K562 (cell line): ENCODE measurements at regions of chr1 and their contacts with region 1.

Region 1: GRCh38 chr1:26787706-26788514 is at the start of gene PIGV:
- DNase-seq: peak; percentile 94 to 97 (median 96)
- ATAC-seq: peak; percentile 76
- H3K4me3 ChIP-seq: peak within 1 kb of the TSS; percentile 66
- H3K27ac ChIP-seq: peak within 1 kb of the TSS; percentile 98
- H3K4me1 ChIP-seq: peaks cover 61 to 81% of the 10 kb centered on the region in 2 experiments
- H3K27me3 ChIP-seq: no peaks in the 10 kb centered on the region
- CTCF ChIP-seq: no peak
- EP300 ChIP-seq: no peak
- POLR2A ChIP-seq: peak; percentile 88
- RAD21 ChIP-seq: no peak; a peak in 2 of 4 replicates
- polyA plus RNA-seq, gene PIGV: 11.3 to 11.7 TPM

Region 2: GRCh38 chr1:26482921-26483680 is 304.8 kb before region 1 on chr1:
- CTCF ChIA-PET with region 1: no interaction called
- POLR2A ChIA-PET with region 1: no interaction called
- in situ Hi-C with region 1: no loop called
- intact Hi-C with region 1: loop called (anchors 5 kb)
- DNase-seq: no peak
- ATAC-seq: no peak
- H3K4me3 ChIP-seq: no peak overlapping the region
- H3K27ac ChIP-seq: no peak overlapping the region
- H3K4me1 ChIP-seq: peaks cover 15 to 16% of the 10 kb centered on the region in 2 experiments
- H3K27me3 ChIP-seq: no peaks in the 10 kb centered on the region
- CTCF ChIP-seq: no peak
- EP300 ChIP-seq: no peak
- POLR2A ChIP-seq: no peak
- RAD21 ChIP-seq: no peak

Region 3: GRCh38 chr1:26602378-26602959 is 185.4 kb before region 1 on chr1:
- CTCF ChIA-PET with region 1: interaction called, 80 read pairs
- POLR2A ChIA-PET with region 1: interaction called, 30 read pairs
- in situ Hi-C with region 1: no loop called
- intact Hi-C with region 1: loop called (anchors 1 kb)
- DNase-seq: peak; percentile 72 to 84 (median 76)
- ATAC-seq: peak; percentile 61
- H3K4me3 ChIP-seq: no peak overlapping the region
- H3K27ac ChIP-seq: no peak overlapping the region
- H3K4me1 ChIP-seq: peaks cover 4 to 22% of the 10 kb centered on the region in 2 experiments; a peak in 4 of 5 replicates
- H3K27me3 ChIP-seq: no peaks in the 10 kb centered on the region
- CTCF ChIP-seq: peak; percentile 83 to 98 (median 83)
- EP300 ChIP-seq: 0 out of 2 replicates have a peak, but pooled peaks have one; percentile 12
- POLR2A ChIP-seq: no peak
- RAD21 ChIP-seq: peak; percentile 100

Region 4: GRCh38 chr1:26677306-26678115 is 110.4 kb before region 1 on chr1:
- CTCF ChIA-PET with region 1: interaction called, 6 read pairs
- POLR2A ChIA-PET with region 1: no interaction called
- in situ Hi-C with region 1: no loop called
- intact Hi-C with region 1: loop called (anchors 1 kb)
- DNase-seq: peak; percentile 52 to 87 (median 73)
- ATAC-seq: peak; percentile 99
- H3K4me3 ChIP-seq: no peak overlapping the region
- H3K27ac ChIP-seq: no peak overlapping the region
- H3K4me1 ChIP-seq: peaks cover 9% of the 10 kb centered on the region in 2 experiments; a peak in 3 of 5 replicates
- H3K27me3 ChIP-seq: no peaks in the 10 kb centered on the region
- CTCF ChIP-seq: peak; percentile 83 to 95 (median 87)
- EP300 ChIP-seq: peak; percentile 41
- POLR2A ChIP-seq: no peak
- RAD21 ChIP-seq: peak; percentile 97 to 98

Region 5: GRCh38 chr1:26705788-26706311 is 82.1 kb before region 1 on chr1:
- CTCF ChIA-PET with region 1: no interaction called
- POLR2A ChIA-PET with region 1: interaction called, 112 read pairs
- in situ Hi-C with region 1: no loop called
- intact Hi-C with region 1: no loop called
- DNase-seq: no peak
- ATAC-seq: no peak
- H3K4me3 ChIP-seq: no peak overlapping the region
- H3K27ac ChIP-seq: peak overlapping the region; percentile 40; the same call in 1 of the 3 replicates
- H3K4me1 ChIP-seq: peaks cover 19 to 52% of the 10 kb centered on the region in 2 experiments; a peak in 4 of 5 replicates
- H3K27me3 ChIP-seq: no peaks in the 10 kb centered on the region
- CTCF ChIP-seq: no peak
- EP300 ChIP-seq: no peak
- POLR2A ChIP-seq: no peak
- RAD21 ChIP-seq: no peak

Region 6: DNA sequence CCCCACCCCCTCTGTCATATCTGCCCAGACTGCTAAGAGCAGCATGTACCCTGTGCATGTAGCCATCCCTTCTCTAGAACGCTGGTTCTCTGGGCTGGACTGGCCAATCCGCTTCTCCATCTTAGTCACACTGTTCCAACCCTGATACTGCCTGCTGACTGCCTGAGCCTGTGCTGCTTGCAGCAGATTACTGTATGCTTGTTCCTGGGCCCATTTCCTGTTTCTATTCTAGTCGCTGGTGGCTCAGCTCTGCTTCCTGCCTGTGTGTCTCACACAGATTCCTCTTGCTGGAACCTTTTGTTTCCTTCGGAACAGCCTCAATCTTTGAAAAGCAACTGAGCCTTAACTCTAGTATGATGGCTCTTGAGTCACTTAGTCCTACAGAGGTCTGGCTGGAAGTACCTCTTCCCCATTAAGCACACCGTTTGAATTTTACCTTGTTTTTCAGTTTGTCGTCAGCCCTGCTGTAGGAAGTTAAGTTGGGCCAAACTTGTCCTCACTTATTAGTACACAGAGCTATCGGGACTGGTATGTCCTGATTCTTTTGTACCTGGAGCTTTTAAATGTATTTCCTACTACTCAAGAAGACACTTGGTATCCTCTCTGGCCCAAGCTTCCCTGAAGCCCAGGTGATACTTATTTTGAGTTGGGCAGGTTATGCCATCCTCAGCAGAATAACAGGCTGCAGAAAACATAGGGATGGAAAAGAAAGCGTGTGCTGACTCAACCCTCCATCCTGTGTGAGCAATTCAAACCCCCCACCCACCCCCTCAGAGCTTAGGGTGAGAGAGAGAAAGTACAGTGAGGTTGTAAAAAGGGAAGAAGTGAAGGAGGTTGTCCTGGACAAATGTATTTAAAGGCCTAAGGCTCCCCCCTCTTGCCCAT is 43.6 kb before region 1 on chr1:
- CTCF ChIA-PET with region 1: no interaction called
- POLR2A ChIA-PET with region 1: interaction called, 9 read pairs
- in situ Hi-C with region 1: no loop called
- intact Hi-C with region 1: loop called (anchors 2 kb)
- DNase-seq: peak; percentile 59 to 97 (median 79)
- ATAC-seq: peak; percentile 99
- H3K4me3 ChIP-seq: no peak overlapping the region
- H3K27ac ChIP-seq: peak overlapping the region; percentile 82
- H3K4me1 ChIP-seq: peaks cover 13 to 27% of the 10 kb centered on the region in 2 experiments; a peak in 4 of 5 replicates
- H3K27me3 ChIP-seq: no peaks in the 10 kb centered on the region
- CTCF ChIP-seq: no peak; a peak in 1 of 6 replicates
- EP300 ChIP-seq: peak; percentile 86
- POLR2A ChIP-seq: no peak
- RAD21 ChIP-seq: peak; percentile 38 to 52

Region 7: GRCh38 chr1:26799479-26800142 is 11.7 kb after region 1 on chr1:
- CTCF ChIA-PET with region 1: no interaction called
- POLR2A ChIA-PET with region 1: interaction called, 62 read pairs
- in situ Hi-C with region 1: no loop called
- intact Hi-C with region 1: no loop called
- DNase-seq: peak in 2 of 4 experiments; percentile 51 to 55
- ATAC-seq: peak; percentile 83
- H3K4me3 ChIP-seq: no peak overlapping the region
- H3K27ac ChIP-seq: peak overlapping the region; percentile 11; the same call in 1 of the 3 replicates
- H3K4me1 ChIP-seq: peaks cover 8 to 41% of the 10 kb centered on the region in 2 experiments; a peak in 4 of 5 replicates
- H3K27me3 ChIP-seq: no peaks in the 10 kb centered on the region
- CTCF ChIP-seq: peak in 1 of 3 experiments; percentile 17; a peak in 1 of 6 replicates
- EP300 ChIP-seq: no peak
- POLR2A ChIP-seq: no peak
- RAD21 ChIP-seq: peak in 1 of 2 experiments; percentile 43; a peak in 1 of 4 replicates